ENCODE measurements at regions of chr6 and their contacts with region 1.

Region 1: DNA sequence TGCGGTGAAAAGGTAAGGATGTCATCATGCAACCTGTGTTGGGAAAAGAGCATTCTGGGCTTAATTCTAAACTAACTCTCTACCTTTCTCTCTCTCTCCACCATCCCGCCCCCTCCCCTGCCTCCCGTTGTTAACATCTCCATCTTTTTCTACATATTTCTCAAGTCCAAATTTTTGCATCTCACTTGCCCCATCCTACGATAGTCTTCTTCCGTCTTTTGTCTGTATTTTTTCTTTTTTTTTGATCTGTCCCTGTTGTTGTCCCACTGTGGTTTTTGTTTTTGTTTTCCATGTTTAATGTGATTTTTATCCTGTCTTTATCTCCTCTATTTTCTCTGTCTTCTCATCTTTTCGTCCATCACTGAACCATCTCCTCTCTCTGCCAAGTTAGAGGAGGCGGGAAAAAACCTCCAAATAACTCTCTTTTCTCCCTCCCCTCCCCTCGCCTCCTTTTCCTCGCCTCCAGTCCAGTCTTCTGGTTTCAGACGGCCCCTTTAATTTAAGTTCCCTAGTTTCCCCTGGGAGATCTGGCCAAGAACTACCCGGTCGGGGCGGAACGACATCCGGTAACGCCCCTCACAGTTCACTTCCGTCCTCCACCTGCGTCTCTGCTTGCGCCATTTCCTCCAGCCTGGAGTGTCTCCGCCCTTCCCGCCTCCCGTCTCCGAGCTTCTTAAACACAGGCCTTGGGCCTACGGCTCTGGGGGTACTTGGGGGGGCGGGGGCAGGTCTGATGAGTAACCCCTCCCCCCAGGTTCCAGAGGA is at the start of gene NFKBIL1:
- DNase-seq: peak; percentile 94 to 97 (median 94)
- H3K4me3 ChIP-seq: peak within 1 kb of the TSS; percentile 42
- H3K27ac ChIP-seq: peak within 1 kb of the TSS; percentile 18 to 69
- H3K4me1 ChIP-seq: peaks cover 6% of the 10 kb centered on the region
- H3K27me3 ChIP-seq: no peaks in the 10 kb centered on the region
- CTCF ChIP-seq: no peak
- EP300 ChIP-seq: no peak
- POLR2A ChIP-seq: peak; percentile 63
- total RNA-seq, gene NFKBIL1: 23.6 to 32.4 (median 27.5) TPM

Region 2: DNA sequence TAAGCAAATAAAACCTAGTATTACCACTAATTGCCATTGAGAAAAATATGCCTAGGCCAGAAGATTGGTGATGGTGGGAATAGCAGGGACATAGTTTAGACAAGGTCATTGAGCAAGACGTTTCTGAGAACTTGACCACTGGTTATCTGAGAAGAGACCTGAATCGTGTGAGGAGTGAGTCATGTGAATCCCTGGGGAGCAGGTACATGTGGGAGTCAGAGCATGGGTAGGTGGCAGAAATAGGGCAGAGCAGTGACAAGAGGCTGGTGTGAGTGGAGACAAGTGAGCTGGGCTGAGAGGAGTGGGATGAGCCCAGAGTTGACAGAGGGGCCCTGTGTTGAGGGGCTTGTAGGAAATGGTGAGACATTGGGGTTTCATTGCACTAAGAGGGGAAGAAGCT is 127.3 kb before region 1 on chr6:
- intact Hi-C with region 1: no loop called
- DNase-seq: no peak
- H3K4me3 ChIP-seq: no peak overlapping the region
- H3K27ac ChIP-seq: no peak overlapping the region
- H3K4me1 ChIP-seq: no peaks in the 10 kb centered on the region
- H3K27me3 ChIP-seq: no peaks in the 10 kb centered on the region
- CTCF ChIP-seq: no peak
- EP300 ChIP-seq: no peak
- POLR2A ChIP-seq: no peak

Region 3: DNA sequence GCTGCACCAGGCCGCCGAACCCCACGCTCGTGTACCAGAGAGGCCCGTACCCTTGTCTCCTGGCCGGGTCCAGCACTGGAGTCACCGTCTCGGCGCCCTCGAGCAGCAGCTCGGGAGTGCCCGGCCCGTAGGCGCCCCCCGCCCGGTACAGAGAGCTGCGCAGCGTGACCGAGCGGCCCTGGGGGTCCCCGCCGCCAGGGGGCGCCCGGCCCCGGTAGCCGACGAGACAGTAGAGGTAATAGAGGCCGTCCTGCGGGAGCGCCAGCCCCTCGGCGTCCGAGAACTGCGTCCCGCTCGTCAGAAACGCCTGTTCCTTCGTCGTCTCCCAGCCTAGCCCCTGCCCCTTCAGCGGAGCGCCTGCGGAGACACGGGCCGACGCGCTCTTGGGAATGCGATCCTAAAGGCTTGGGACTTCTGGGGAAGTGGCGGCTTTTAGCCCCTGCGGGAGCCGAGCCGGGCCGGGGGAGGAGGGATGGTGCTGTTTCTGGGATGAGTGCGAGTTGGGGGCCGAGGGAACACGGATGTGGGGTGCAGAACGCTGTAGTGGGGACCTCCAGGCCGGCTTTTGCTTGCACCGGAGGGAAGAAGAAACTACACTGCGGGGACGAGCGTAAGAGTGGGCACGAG is 33.8 kb after region 1 on chr6:
- intact Hi-C with region 1: loop called in 1 of 4 experiments (anchors 5 kb)
- DNase-seq: peak; percentile 82 to 93 (median 89)
- H3K4me3 ChIP-seq: peak overlapping the region; percentile 68
- H3K27ac ChIP-seq: peak overlapping the region in 1 of 2 donors; percentile 70
- H3K4me1 ChIP-seq: peaks cover 5% of the 10 kb centered on the region
- H3K27me3 ChIP-seq: no peaks in the 10 kb centered on the region
- CTCF ChIP-seq: peak; percentile 97 to 98 (median 98)
- EP300 ChIP-seq: no peak
- POLR2A ChIP-seq: no peak

Region 4: GRCh38 chr6:31597006-31597405 is 49.9 kb after region 1 on chr6:
- intact Hi-C with region 1: loop called in 3 of 4 experiments (anchors 1 to 5 kb)
- DNase-seq: no peak
- H3K4me3 ChIP-seq: no peak overlapping the region
- H3K27ac ChIP-seq: no peak overlapping the region
- H3K4me1 ChIP-seq: no peaks in the 10 kb centered on the region
- H3K27me3 ChIP-seq: no peaks in the 10 kb centered on the region
- CTCF ChIP-seq: no peak
- EP300 ChIP-seq: no peak
- POLR2A ChIP-seq: no peak